Activated T-helper 1 cell treated with anti-CD3 and anti-CD28 coated beads, Interleukin-12 subunit alpha, Interleukin-12 subunit beta, Interleukin-2, Interleukin-4 antibody, amounts not matched to agents 30 ng/mL and 10 ng/mL and 1 ng/mL, durations not matched to agents 14 hours and 24 hours and 36 hours (primary cell): ENCODE measurements at regions of chr6 and their contacts with region 1.

Region 1: GRCh38 chr6:14734416-14735340 is 511.2 kb upstream of the JARID2 start:
- DNase-seq: peak; percentile 58
- H3K4me3 Mint-ChIP-seq: peak overlapping the region; percentile 36
- H3K27ac Mint-ChIP-seq: peak overlapping the region; percentile 94
- H3K4me1 Mint-ChIP-seq: peaks cover 91% of the 10 kb centered on the region
- H3K27me3 Mint-ChIP-seq: no peaks in the 10 kb centered on the region

Region 2: DNA sequence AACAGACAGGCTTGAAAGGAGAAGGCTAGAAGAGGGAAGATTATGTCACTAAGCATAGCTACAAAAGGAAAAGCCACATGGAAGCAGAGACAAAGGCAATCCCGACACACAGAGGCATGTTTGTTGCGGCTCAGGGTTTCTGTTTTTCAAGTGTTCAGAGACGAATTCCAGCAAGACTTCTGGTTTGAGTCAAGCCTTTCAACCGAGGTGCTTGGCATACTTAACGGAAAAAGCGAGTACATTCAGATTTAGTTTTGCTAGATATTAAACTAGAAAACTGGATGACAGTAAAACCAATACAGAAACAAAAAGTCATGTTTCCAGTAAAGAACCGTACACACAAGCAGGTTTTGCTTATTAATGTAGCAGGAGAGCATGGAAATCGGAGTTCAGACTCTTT is 947.5 kb before region 1 on chr6:
- intact Hi-C with region 1: loop called (anchors 5 kb)
- DNase-seq: no peak
- H3K4me3 Mint-ChIP-seq: peak overlapping the region; percentile 41
- H3K27ac Mint-ChIP-seq: peak overlapping the region; percentile 82
- H3K4me1 Mint-ChIP-seq: peaks cover 33% of the 10 kb centered on the region
- H3K27me3 Mint-ChIP-seq: no peaks in the 10 kb centered on the region

Region 3: DNA sequence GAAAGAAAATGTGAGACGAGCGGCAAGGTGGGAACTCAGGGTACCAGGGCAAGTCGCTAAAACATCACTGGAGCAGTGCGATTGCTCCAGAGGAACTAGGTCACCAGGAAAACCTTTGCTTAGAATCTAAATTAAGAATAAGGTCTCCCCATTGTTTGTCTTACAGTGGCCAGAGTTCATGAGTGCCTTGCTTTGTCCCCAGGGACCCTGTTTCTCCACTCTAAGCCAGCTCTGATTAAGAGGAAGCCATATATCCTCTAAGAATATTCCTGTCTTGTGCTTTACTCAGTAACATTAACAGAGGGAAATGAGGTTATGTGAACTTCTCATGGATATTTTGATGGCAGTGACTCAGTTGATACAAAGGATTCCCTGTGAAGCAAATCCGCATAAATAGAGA is 311.3 kb before region 1 on chr6:
- intact Hi-C with region 1: loop called (anchors 1 kb)
- DNase-seq: no peak
- H3K4me3 Mint-ChIP-seq: no peak overlapping the region
- H3K27ac Mint-ChIP-seq: peak overlapping the region; percentile 26
- H3K4me1 Mint-ChIP-seq: peaks cover 26% of the 10 kb centered on the region
- H3K27me3 Mint-ChIP-seq: no peaks in the 10 kb centered on the region

Region 4: DNA sequence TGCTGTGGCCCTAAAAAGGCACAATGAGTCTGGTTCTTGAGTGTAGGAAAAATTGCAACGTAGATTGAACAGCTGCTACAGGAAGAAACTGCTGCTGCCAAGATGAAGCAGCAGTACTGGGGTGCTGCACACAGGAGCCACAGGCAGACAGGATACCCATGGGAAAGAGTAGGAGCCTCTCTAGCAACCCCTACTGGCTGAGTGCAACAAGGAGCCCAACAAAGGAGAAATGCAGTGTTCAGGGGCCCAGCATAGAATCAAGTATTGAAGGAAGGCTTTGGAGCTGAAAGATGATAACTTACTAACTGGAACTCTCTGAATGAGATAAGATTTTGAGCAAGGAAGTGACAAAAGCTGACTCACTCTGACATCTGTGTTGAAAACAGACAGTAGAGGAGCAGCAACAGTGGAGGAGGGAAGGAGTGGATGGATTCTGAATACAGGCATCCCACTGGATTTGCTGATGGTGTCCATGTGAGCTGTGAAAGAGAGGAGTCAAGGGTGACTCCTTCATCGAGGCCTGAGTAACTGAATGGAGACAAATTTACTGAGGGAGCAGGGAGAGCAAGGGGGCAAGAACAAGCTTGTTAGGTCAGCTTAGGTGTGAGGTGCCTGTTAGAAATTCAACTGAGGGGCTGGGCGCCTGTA is 23.5 kb before region 1 on chr6:
- intact Hi-C with region 1: loop called (anchors 1 kb)
- DNase-seq: peak; percentile 56
- H3K4me3 Mint-ChIP-seq: peak overlapping the region; percentile 19
- H3K27ac Mint-ChIP-seq: peak overlapping the region; percentile 92
- H3K4me1 Mint-ChIP-seq: peaks cover 36% of the 10 kb centered on the region
- H3K27me3 Mint-ChIP-seq: peaks cover 4% of the 10 kb centered on the region

Region 5: GRCh38 chr6:14876778-14877613 is 142.3 kb after region 1 on chr6:
- intact Hi-C with region 1: loop called (anchors 1 kb)
- DNase-seq: peak; percentile 48
- H3K4me3 Mint-ChIP-seq: peak overlapping the region; percentile 68
- H3K27ac Mint-ChIP-seq: peak overlapping the region; percentile 98
- H3K4me1 Mint-ChIP-seq: peaks cover 75% of the 10 kb centered on the region
- H3K27me3 Mint-ChIP-seq: no peaks in the 10 kb centered on the region

Region 6: DNA sequence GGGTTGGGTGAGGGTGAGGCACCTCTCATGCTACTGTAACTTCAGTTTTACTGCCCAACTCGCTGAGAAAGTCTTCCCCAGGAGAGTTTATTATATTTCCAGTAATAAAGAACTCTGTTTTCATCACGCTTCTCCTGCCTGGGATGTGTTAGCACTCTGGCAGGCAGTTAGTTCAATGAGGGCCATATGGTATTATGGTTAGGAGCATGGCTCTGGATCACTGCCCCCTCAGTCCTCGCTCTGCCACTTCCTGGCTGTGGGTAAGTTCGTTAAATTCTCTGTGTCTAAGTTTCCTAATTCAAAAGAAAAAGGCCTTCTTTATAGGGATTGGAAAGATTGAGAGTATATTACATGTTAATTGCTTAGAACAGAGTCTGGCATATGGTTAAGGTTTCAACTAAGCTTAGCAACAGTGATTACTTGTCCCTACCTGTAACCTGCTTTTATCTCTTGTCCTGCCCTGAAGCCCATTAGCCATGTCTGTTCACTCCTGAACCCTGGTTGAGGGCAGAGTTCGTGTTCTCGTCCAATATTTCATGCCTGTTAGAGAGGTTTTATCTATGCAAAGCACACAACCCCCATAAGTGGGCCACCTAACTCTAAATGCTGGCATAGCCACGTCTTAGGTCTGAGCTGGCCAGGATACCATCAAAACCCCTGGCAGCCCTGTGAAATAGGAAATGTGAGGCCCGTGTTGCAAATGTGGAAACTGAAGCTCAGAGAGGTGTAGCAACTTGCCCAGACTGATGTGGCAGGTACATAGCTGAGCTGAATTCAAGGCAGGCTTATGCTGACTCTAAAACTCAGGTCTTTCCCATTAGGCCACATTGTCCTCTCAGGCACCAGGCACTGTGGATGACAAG is 168.7 kb after region 1 on chr6:
- intact Hi-C with region 1: no loop called
- DNase-seq: no peak
- H3K4me3 Mint-ChIP-seq: no peak overlapping the region
- H3K27ac Mint-ChIP-seq: no peak overlapping the region
- H3K4me1 Mint-ChIP-seq: peaks cover 7% of the 10 kb centered on the region
- H3K27me3 Mint-ChIP-seq: peaks cover 2% of the 10 kb centered on the region

Region 7: GRCh38 chr6:15299430-15300131 is 564.9 kb after region 1 on chr6:
- intact Hi-C with region 1: loop called (anchors 1 kb)
- DNase-seq: no peak
- H3K4me3 Mint-ChIP-seq: peak overlapping the region; percentile 69
- H3K27ac Mint-ChIP-seq: peak overlapping the region; percentile 69
- H3K4me1 Mint-ChIP-seq: peaks cover 82% of the 10 kb centered on the region
- H3K27me3 Mint-ChIP-seq: no peaks in the 10 kb centered on the region

Region 8: DNA sequence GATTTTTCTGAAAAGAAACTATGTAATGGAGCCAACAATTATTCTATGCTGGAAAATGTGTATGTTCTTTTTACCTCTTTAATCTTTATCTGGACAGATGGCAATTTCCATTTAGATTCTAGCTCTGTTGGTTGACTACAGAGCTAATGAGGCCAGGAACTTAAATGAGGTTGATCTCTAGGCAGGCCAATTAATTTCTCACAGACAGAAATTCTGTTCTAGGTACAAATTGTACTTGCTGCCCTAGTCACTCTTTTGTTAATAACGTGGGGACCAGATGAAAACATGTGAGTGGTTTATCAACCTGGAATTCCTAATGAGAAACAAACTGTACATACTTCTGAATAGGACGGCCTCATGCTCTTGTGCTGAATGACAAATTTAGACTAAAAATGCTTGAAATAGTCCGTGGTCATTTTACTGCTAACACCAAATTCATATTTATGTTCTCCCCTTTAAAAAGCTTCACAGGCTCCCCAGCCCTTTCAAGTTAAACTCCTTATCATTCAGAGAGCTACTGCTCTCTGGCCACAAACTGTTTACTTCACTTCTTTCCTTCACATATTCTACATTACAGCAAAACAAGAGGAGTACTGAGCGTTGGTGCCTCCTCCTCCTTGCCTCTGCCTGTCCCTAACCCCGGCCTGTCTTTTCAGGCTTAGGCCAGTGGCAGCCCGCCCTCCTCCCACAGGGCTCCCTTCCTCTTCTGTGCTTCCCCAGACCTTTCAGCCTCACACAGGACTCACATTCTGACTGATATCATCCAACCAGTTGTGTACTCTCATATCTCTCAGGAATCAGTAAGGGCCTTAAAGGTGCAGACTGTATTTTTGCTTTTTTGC is 886.7 kb after region 1 on chr6:
- intact Hi-C with region 1: loop called (anchors 5 kb)
- DNase-seq: no peak
- H3K4me3 Mint-ChIP-seq: no peak overlapping the region
- H3K27ac Mint-ChIP-seq: peak overlapping the region; percentile 16
- H3K4me1 Mint-ChIP-seq: peaks cover 27% of the 10 kb centered on the region
- H3K27me3 Mint-ChIP-seq: peaks cover 2% of the 10 kb centered on the region